Right ventricle myocardium inferior (tissue), 1 donor: ENCODE measurements at regions of chr6 and their contacts with region 1.

Region 1: GRCh38 chr6:129140526-129140925 is 257.6 kb downstream of the LAMA2 start:
- DNase-seq: no peak
- ATAC-seq: peak; percentile 70

Region 2: DNA sequence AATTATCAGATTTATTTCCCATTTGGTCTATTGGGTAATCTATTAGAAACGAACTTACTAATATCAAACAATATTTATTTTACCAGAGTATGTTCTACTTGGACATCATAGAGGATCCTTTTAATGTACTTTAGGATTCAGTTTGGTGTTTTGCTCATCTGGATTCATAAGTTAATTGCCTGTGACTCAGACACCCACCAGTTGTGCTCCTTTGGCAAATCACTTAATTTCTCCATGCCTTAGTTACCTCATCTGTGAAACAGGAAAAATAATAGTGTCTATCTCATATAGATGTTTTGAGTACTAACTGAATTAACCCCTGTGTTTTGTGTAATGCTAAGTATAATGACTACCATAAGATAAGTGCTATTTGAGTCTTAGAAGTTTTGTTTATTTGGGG is 34.5 kb after region 1 on chr6:
- intact Hi-C with region 1: loop called (anchors 5 kb)
- DNase-seq: no peak
- ATAC-seq: no peak

Region 3: DNA sequence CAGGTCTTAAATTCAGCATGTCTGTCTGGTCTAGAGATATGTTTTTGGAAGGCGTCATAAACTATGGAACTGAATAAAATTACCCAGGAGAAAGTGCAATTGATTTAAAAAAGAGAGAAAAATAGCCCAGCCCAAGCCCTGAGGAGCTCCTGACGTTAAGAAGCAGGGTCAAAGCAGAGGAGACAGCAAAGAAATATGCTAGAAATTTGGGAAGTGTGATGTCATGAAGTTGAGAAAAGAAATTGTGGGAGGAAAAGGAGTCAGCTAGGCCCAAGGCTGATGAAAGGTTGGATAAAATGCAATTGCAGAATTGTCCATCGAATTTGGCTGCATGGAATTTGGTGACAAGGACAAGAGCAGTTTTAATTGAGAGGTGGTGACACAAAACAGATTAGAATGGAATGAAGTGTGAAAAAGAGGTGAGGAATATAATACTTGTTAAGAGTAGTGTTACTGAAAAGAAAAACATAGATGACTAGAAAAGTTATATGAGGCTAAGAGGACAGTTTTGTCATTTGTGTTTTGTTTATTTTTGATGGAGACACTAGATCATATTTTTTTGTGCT is 124.0 kb after region 1 on chr6:
- intact Hi-C with region 1: no loop called
- DNase-seq: no peak
- ATAC-seq: peak; percentile 66